Activated T-helper 1 cell treated with anti-CD3 and anti-CD28 coated beads, Interleukin-12 subunit alpha, Interleukin-12 subunit beta, Interleukin-2, Interleukin-4 antibody, amounts not matched to agents 30 ng/mL and 10 ng/mL and 1 ng/mL, durations not matched to agents 14 hours and 24 hours and 36 hours (primary cell): ENCODE measurements at regions of chr12 and their contacts with region 1.

Region 1: DNA sequence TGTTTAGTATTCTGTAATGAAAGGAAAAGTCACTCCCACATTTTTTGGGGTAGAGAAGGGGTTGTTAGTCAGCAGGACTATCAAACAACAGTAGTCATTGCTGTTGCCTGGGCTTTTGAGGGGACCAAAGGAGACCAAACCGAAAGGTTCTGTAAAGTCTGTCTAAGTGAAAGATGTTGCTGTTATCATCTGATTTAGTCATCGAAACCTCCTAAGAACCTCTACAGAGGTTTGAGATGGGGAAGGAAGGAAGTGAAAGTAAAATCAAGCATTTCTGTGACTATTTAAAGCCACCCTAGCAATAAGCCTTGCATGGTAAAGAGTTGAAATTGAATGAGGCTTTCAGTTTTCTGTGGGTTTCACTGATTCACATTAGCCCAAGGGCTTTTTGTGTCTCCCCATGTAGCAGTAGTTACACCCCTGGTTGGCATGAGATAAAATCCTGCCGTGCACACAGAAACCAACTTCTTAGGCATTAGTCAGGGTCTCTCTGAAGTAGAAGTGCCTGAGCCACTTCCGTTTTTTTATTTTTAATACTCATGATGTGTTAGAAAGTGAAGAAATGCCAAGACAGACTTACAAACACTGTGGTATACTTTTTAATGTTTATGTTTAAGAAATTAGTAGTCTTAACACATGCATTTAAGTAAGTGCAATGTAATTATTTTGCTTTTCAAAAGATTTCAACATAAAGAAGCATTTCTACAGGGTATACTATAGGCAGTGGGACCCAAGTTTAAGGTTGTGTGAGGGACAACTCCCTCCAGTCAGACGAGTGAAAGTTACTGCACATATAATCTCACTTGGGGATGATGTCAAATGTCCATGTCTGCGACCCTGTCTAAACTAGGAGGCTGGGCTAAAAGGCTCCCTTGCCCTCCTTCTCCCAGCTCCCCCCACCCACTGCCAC is 50.4 kb downstream of the DYRK2 start:
- DNase-seq: peak; percentile 34
- H3K4me3 Mint-ChIP-seq: peak overlapping the region; percentile 42
- H3K27ac Mint-ChIP-seq: peak overlapping the region; percentile 67
- H3K4me1 Mint-ChIP-seq: peaks cover 49% of the 10 kb centered on the region
- H3K27me3 Mint-ChIP-seq: peaks cover 53% of the 10 kb centered on the region

Region 2: GRCh38 chr12:67268896-67269631 is 429.9 kb before region 1 on chr12 and contains the start of gene CAND1:
- intact Hi-C with region 1: loop called (anchors 1 kb)
- DNase-seq: peak; percentile 94
- H3K4me3 Mint-ChIP-seq: peak within 1 kb of the TSS; percentile 92
- H3K27ac Mint-ChIP-seq: peak within 1 kb of the TSS; percentile 99
- H3K4me1 Mint-ChIP-seq: peaks cover 39% of the 10 kb centered on the region
- H3K27me3 Mint-ChIP-seq: no peaks in the 10 kb centered on the region
- total RNA-seq, gene CAND1: 185 and 209 TPM in 2 replicates

Region 3: GRCh38 chr12:67592216-67593011 is 106.5 kb before region 1 on chr12:
- intact Hi-C with region 1: loop called (anchors 1 kb)
- DNase-seq: peak; percentile 20
- H3K4me3 Mint-ChIP-seq: peak overlapping the region; percentile 41
- H3K27ac Mint-ChIP-seq: peak overlapping the region; percentile 90
- H3K4me1 Mint-ChIP-seq: peaks cover 58% of the 10 kb centered on the region
- H3K27me3 Mint-ChIP-seq: no peaks in the 10 kb centered on the region

Region 4: GRCh38 chr12:67804168-67804567 is 105.2 kb after region 1 on chr12:
- intact Hi-C with region 1: loop called (anchors 1 kb)
- DNase-seq: peak; percentile 22
- H3K4me3 Mint-ChIP-seq: no peak overlapping the region
- H3K27ac Mint-ChIP-seq: no peak overlapping the region
- H3K4me1 Mint-ChIP-seq: peaks cover 13% of the 10 kb centered on the region
- H3K27me3 Mint-ChIP-seq: peaks cover 4% of the 10 kb centered on the region

Region 5: GRCh38 chr12:68040450-68041075 is 341.6 kb after region 1 on chr12:
- intact Hi-C with region 1: loop called (anchors 5 kb)
- DNase-seq: peak; percentile 56
- H3K4me3 Mint-ChIP-seq: peak overlapping the region; percentile 13
- H3K27ac Mint-ChIP-seq: peak overlapping the region; percentile 83
- H3K4me1 Mint-ChIP-seq: peaks cover 65% of the 10 kb centered on the region
- H3K27me3 Mint-ChIP-seq: no peaks in the 10 kb centered on the region

Region 6: DNA sequence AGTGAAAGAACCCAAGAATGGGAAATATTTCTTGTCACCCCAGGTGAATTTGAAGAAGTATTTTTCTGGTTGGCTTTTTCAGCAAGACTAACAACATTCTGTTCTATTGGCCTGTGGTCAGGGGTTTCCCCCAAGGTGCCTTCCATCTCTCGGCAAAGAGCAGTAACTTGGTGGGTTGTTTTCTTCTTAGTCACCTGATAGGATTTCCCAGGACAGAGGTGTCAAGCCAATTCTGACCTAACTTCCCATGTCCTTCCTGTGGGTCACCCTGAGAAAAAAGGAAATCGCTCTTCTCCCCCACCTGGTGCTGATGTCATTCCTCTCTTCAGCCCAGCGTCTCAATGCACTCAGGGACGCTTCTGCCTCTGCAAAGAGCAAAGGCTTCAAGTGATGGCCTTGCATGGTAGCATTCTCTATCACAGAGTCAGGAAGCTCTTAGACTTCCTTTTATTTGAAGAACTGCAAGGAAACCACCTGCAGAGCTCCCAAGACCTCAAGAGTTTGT is 476.7 kb after region 1 on chr12:
- intact Hi-C with region 1: loop called (anchors 5 kb)
- DNase-seq: peak; percentile 81
- H3K4me3 Mint-ChIP-seq: peak overlapping the region; percentile 32
- H3K27ac Mint-ChIP-seq: peak overlapping the region; percentile 85
- H3K4me1 Mint-ChIP-seq: peaks cover 81% of the 10 kb centered on the region
- H3K27me3 Mint-ChIP-seq: no peaks in the 10 kb centered on the region